Lower leg skin (tissue), 4 donors: ENCODE measurements at regions of chr12 and their contacts with region 1.

Region 1: DNA sequence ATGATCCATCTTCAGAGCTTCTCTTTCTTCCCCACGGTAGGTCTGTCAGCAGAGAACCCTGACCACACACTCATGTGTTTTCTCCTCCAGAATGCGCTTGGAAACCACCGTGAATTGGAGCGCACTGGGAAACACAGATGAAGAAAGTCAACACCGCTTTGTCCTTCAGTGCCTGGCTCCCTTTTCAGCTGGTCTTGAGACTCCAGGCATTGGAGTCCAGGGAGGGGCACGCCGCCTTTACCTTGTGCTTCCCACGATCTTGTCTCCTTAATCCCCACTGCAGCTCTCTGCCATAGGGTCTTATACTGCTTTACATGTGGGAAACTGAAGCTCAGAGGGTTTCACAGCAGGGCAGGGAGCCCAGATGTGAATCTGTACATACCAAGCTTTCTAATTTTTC is 1.1 kb downstream of the FAM90A1 start:
- DNase-seq: no peak
- H3K4me3 ChIP-seq: no peak overlapping the region
- CTCF ChIP-seq: no peak
- POLR2A ChIP-seq: no peak

Region 2: DNA sequence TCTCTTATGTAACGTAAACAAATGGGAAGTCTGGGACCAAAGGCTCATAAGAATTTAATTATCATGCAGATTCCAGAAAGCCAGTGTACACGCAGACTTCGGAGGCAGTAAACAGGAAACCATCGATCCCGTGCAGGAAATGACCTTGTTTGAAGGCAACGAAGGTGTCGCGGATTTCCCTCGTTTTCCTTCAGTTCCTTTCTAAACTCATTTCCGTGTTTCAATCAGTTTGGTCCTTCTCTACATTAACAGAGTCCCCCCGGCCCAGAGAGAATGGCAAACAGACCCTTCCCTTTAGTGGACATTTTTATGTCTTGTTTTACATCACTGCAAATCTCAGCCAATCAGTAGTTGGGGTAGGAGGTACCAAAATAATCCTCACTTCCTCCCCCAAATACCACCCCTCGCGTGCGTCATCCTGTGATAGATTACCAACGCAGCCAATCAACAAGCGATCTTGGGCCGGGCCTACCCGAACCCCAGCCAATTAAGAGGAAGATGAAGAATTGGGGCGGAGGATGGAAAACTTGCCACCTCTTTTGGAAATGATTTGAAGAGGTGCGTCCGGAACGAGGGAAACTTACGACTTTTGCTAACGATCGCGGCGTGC is 200.0 kb before region 1 on chr12:
- intact Hi-C with region 1: no loop called
- DNase-seq: peak; percentile 99
- H3K4me3 ChIP-seq: peak overlapping the region; percentile 58
- CTCF ChIP-seq: no peak
- POLR2A ChIP-seq: peak in 1 of 2 donors; percentile 52

Region 3: DNA sequence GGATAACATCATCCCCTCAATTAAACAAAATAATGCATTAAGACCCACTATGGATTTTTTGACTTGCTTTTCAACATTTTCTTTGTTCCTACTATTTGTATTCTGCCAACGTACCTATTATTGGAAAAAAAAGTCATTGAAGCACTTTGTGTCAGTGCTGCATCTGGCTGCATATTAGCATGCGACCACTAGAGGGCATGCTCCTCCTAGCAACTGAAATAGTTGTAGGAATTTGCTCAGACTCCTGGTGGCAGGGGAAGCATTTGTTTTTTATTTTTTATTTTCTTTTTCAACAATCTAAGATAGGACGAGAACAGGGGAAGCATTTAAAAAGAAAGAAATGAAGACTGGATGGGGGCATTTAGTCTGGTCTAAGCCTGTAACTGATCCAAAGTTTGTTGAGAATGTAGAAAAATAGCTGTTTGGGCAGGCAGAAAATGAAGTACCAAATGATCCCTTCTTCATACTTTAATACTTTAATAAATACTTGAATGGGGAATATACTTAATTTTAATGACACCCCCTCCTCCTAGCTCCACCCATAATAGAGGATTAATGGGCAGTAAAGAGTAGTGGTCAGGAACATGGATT is 117.5 kb before region 1 on chr12:
- intact Hi-C with region 1: loop called (anchors 10 kb)
- DNase-seq: peak; percentile 65 to 89
- H3K4me3 ChIP-seq: no peak overlapping the region
- CTCF ChIP-seq: peak in 1 of 3 donors; percentile 91
- POLR2A ChIP-seq: no peak

Region 4: GRCh38 chr12:8527250-8528130 is 301.1 kb after region 1 on chr12:
- intact Hi-C with region 1: no loop called
- DNase-seq: no peak
- H3K4me3 ChIP-seq: no peak overlapping the region
- CTCF ChIP-seq: no peak
- POLR2A ChIP-seq: no peak